ENCODE measurements at regions of chr2 and their contacts with region 1.

Region 1: GRCh38 chr2:88590998-88591613 is 36.2 kb downstream of the EIF2AK3 start:
- DNase-seq: peak; percentile 47
- H3K4me3 ChIP-seq: no peak overlapping the region; a peak in 1 of 4 replicates
- H3K27ac ChIP-seq: peak overlapping the region; percentile 12 to 67; a peak in 3 of 4 replicates
- H3K4me1 ChIP-seq: no peaks in the 10 kb centered on the region; a peak in 1 of 4 replicates
- H3K27me3 ChIP-seq: no peaks in the 10 kb centered on the region
- CTCF ChIP-seq: peak; percentile 91
- EP300 ChIP-seq: no peak
- RAD21 ChIP-seq: peak; percentile 96

Region 2: GRCh38 chr2:88651660-88652059 is 60.6 kb after region 1 on chr2:
- CTCF ChIA-PET with region 1: interaction called, 21 read pairs
- POLR2A ChIA-PET with region 1: no interaction called
- DNase-seq: no peak
- H3K4me3 ChIP-seq: no peak overlapping the region
- H3K27ac ChIP-seq: no peak overlapping the region
- H3K4me1 ChIP-seq: peaks cover 0 to 5% of the 10 kb centered on the region in 2 experiments; a peak in 2 of 4 replicates
- H3K27me3 ChIP-seq: no peaks in the 10 kb centered on the region
- CTCF ChIP-seq: no peak
- EP300 ChIP-seq: no peak
- RAD21 ChIP-seq: no peak

Region 3: GRCh38 chr2:88659538-88659916 is 68.4 kb after region 1 on chr2:
- CTCF ChIA-PET with region 1: interaction called, 308 read pairs
- POLR2A ChIA-PET with region 1: no interaction called
- DNase-seq: no peak
- H3K4me3 ChIP-seq: no peak overlapping the region
- H3K27ac ChIP-seq: peak overlapping the region; percentile 68 to 88; a peak in 3 of 4 replicates
- H3K4me1 ChIP-seq: peaks cover 0 to 19% of the 10 kb centered on the region in 2 experiments; a peak in 2 of 4 replicates
- H3K27me3 ChIP-seq: no peaks in the 10 kb centered on the region
- CTCF ChIP-seq: no peak
- EP300 ChIP-seq: no peak
- RAD21 ChIP-seq: no peak

Measured in SK-N-SH (cell line).